Activated naive CD4-positive, alpha-beta T cell treated with anti-CD3 and anti-CD28 coated beads for 36 hours (primary cell): ENCODE measurements at regions of chr17 and their contacts with region 1.

Region 1: GRCh38 chr17:29514792-29515191 is 52.0 kb downstream of the ABHD15 start:
- DNase-seq: no peak
- H3K4me3 Mint-ChIP-seq: no peak overlapping the region
- H3K27ac Mint-ChIP-seq: no peak overlapping the region
- H3K4me1 Mint-ChIP-seq: no peaks in the 10 kb centered on the region
- H3K27me3 Mint-ChIP-seq: no peaks in the 10 kb centered on the region

Region 2: DNA sequence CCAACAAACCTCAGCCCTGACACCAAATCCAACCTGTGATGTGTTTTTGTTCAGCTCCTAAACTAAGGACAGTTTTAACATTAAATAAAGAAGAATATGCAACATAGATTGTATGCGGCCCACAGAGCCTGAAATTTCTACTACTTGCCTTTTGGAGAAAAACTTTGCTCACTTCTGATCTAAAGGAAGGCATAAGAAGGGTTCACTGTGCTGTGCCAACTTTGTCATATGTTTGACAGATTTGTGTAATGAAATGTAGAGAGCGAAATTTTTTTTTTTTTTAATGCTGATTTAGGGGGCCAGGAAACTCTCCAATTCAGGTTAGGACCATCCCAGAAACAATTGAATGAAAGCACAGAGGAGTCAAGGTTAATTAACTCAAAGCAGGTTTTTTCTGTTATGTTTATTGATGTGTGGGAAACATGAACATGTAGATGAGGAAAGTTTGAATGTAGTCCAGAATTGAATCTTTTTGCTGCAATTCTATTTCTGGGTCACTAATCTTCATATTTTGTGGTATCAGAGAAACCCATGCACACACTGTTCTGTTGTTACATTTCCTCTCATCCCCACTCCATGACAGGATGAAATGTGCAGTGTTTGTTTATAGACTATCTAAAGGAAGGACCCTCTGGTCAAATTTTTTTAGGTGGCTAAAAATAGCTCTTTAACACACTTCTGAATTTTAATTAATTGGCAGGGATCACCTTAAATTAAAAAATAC is 53.1 kb before region 1 on chr17:
- CTCF ChIA-PET with region 1: no interaction called
- intact Hi-C with region 1: no loop called
- DNase-seq: no peak
- H3K4me3 Mint-ChIP-seq: no peak overlapping the region
- H3K27ac Mint-ChIP-seq: no peak overlapping the region
- H3K4me1 Mint-ChIP-seq: peaks cover 12% of the 10 kb centered on the region
- H3K27me3 Mint-ChIP-seq: no peaks in the 10 kb centered on the region

Region 3: GRCh38 chr17:29474297-29474696 is 40.5 kb before region 1 on chr17:
- CTCF ChIA-PET with region 1: no interaction called
- intact Hi-C with region 1: no loop called
- DNase-seq: no peak
- H3K4me3 Mint-ChIP-seq: no peak overlapping the region
- H3K27ac Mint-ChIP-seq: no peak overlapping the region
- H3K4me1 Mint-ChIP-seq: no peaks in the 10 kb centered on the region
- H3K27me3 Mint-ChIP-seq: no peaks in the 10 kb centered on the region

Region 4: GRCh38 chr17:29533976-29534375 is 19.2 kb after region 1 on chr17:
- CTCF ChIA-PET with region 1: interaction called, 10 read pairs
- intact Hi-C with region 1: no loop called
- DNase-seq: no peak
- H3K4me3 Mint-ChIP-seq: no peak overlapping the region
- H3K27ac Mint-ChIP-seq: no peak overlapping the region
- H3K4me1 Mint-ChIP-seq: no peaks in the 10 kb centered on the region
- H3K27me3 Mint-ChIP-seq: no peaks in the 10 kb centered on the region